A549 (cell line): ENCODE measurements at regions of chr19 and their contacts with region 1.

Region 1: DNA sequence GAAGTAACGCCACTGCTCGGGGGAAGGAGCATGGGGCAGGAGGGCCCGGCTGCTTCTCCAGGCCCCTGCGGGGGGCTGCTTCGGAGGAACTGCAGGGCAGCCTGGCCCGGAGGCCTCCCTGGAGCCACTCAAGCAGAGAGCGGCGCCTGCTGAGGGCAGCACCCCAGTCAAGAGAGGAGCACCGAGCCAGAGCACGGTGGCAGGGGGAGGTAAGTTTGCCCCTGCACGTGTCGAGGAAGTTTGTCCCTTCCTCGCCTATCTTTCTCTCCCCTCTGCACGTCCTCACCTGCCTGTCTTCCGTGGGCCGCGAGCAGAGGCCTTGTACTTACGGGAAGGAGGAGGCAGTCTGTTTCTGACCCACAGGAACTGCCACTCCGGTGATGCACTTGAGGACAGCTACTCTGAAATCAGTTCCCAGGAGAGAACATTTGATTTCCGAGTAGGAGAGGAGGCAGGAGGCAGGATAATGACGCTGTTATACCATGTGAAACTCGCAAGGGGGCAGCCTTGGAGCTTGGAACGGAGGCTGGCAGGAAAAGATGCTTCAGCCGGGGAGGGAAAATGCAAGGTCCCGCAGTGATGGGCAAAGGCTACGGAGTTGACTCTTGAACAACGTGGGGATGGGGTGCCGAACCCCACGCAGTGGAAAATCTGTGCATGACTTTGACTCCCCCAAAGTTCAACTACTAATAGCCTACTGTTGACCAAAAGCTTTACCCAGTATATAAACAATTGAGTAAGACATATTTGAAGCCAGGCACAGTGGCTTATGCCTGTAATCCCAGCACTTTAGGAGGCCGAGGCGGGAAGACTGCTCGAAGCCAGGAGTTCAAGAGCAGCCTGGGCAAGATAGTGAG is 5.0 kb downstream of the FFAR1 start:
- DNase-seq: peak; percentile 87 to 98
- ATAC-seq: peak; percentile 77 to 88
- H3K4me3 ChIP-seq: no peak overlapping the region
- H3K27ac ChIP-seq: no peak overlapping the region
- H3K4me1 ChIP-seq: no peaks in the 10 kb centered on the region
- CTCF ChIP-seq: peak; percentile 98
- EP300 ChIP-seq: no peak
- POLR2A ChIP-seq: no peak
- RAD21 ChIP-seq: peak; percentile 98 to 99

Region 2: DNA sequence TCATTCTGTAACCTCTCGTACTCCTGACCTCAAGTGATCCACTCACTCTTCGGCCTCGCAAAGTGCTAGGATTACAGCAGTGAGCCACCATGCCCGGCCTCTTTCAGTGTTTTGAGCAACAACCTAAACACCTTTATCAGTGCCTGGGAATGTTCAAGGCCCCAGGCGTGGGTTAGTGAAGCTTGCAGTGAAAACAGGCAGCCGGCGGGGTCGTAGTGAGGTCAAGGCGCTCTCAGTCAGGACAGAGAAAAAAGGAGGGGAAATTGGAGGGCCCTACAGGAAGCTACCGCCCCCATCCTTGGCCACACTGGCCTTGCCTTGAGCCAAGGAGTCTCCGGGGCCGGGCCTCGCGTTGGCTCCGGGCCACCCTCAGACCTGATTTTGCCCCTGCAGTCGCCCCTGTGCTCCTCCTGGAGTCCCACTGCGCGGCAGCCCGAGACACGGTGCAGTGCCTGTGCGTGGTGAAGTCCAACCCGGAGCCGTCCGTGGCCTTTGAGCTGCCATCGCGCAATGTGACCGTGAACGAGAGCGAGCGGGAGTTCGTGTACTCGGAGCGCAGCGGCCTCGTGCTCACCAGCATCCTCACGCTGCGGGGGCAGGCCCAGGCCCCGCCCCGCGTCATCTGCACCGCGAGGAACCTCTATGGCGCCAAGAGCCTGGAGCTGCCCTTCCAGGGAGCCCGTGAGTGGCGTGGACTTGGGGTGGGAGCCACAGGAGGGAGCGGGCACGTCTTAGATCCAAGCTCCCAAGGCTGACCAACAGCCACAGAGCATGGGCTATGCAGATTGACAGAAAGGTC is 43.0 kb before region 1 on chr19:
- CTCF ChIA-PET with region 1: interaction called, 22 read pairs
- POLR2A ChIA-PET with region 1: no interaction called
- DNase-seq: no peak
- ATAC-seq: no peak
- H3K4me3 ChIP-seq: no peak overlapping the region
- H3K27ac ChIP-seq: no peak overlapping the region
- H3K4me1 ChIP-seq: peaks cover 2% of the 10 kb centered on the region; the same call in 1 of the 3 replicates
- CTCF ChIP-seq: no peak
- EP300 ChIP-seq: no peak
- POLR2A ChIP-seq: 0 out of 2 replicates have a peak, but pooled peaks have one; percentile 5
- RAD21 ChIP-seq: no peak

Region 3: DNA sequence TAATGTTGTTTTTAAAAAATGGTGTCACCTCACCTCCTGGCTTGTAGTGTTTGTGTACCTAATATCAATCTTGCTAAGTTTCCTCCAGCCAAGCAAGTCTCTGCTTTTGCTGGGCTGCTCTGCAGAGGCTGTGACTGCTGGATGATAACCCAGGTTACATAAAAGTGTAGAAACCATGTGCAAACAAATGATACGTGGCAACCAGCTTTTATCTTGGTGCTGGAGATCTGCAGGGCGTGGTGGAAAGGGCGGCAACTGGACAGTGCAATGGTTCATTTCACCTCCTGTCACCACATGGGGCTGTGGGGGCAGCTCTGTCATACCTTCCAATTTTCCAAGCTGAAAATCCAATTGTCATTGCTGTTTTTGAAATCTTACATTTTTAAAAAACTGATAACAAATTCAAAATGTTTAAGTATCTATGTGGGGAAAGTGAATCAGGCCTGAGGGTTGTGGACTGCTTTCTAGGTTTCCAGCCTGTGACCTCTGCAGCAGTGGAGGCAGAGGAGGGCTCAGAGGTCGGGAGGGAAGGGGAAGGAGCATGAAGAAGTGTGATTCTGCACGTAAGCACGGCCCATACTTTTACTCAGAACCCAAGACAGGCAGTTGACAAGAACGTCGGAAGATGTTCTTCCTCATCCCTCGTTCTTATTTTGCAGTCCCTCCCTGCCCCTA is 27.9 kb after region 1 on chr19:
- CTCF ChIA-PET with region 1: interaction called, 29 read pairs
- POLR2A ChIA-PET with region 1: no interaction called
- DNase-seq: no peak
- ATAC-seq: no peak; a peak in 1 of 6 replicates
- H3K4me3 ChIP-seq: no peak overlapping the region
- H3K27ac ChIP-seq: no peak overlapping the region
- H3K4me1 ChIP-seq: no peaks in the 10 kb centered on the region
- CTCF ChIP-seq: no peak
- EP300 ChIP-seq: no peak
- POLR2A ChIP-seq: no peak
- RAD21 ChIP-seq: no peak

Region 4: DNA sequence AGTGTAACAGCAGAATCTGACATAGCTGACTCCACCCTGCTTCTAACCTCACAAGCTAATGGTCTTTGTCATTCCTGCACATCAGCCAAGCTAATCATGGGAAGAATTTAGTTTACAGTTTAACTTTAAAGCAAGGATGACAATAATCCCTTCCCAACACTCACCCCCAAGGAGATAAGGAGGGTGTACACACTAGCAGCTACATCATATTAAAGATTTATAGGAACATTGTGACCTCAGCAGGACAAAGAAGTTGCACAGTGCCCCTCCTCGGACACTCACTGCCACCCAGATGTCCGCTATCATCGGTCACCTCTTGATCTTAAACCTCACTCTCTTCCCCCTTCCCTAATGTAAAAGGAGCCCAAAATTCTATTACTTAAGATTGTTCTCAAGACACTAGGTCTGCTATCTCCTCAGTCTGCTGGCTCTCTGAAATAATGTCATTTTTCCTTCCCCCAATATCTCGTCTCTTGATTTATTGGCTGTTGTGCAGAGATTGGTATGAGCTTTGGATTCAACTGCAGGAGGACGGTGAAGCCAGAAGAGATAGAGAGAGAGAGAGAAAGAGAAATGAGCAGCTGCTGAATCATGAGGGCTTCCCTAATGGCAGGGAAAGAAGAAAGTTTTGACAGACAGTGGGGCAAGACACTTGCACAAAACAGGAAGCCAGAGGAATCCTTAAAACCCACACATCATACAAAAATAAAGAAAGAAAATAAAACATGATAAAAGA is 77.9 kb after region 1 on chr19:
- CTCF ChIA-PET with region 1: interaction called, 27 read pairs
- POLR2A ChIA-PET with region 1: no interaction called
- DNase-seq: no peak
- ATAC-seq: no peak
- H3K4me3 ChIP-seq: no peak overlapping the region
- H3K27ac ChIP-seq: no peak overlapping the region
- H3K4me1 ChIP-seq: no peaks in the 10 kb centered on the region
- CTCF ChIP-seq: no peak
- EP300 ChIP-seq: no peak
- POLR2A ChIP-seq: no peak
- RAD21 ChIP-seq: no peak

Region 5: DNA sequence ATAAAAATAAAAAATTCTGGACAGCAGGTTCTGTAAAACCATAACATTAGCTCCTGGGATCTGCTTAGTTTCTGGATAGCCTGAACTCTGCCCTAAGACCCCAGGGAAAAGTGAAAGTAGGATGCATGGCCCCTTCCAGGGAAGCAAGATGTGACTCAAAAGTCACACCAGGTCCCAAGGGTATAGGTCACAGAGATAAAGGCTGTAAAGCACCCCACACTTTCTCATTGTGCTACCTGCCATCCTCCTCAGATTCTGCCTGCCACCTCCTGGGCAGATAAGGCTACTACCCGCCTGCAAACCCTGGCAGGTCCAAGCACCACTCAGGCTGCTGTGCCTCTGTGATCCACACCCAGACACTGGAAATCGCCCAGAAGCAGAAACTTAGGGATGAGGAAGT is 116.0 kb after region 1 on chr19:
- CTCF ChIA-PET with region 1: interaction called, 368 read pairs
- POLR2A ChIA-PET with region 1: no interaction called
- DNase-seq: peak; percentile 72 to 82
- ATAC-seq: peak; percentile 99
- H3K4me3 ChIP-seq: no peak overlapping the region
- H3K27ac ChIP-seq: no peak overlapping the region
- H3K4me1 ChIP-seq: no peaks in the 10 kb centered on the region
- CTCF ChIP-seq: peak; percentile 74
- EP300 ChIP-seq: no peak
- POLR2A ChIP-seq: no peak
- RAD21 ChIP-seq: peak; percentile 80 to 85

Region 6: GRCh38 chr19:35501684-35502083 is 149.0 kb after region 1 on chr19:
- CTCF ChIA-PET with region 1: interaction called, 256 read pairs
- POLR2A ChIA-PET with region 1: no interaction called
- DNase-seq: no peak
- ATAC-seq: no peak
- H3K4me3 ChIP-seq: no peak overlapping the region
- H3K27ac ChIP-seq: no peak overlapping the region
- H3K4me1 ChIP-seq: no peaks in the 10 kb centered on the region
- CTCF ChIP-seq: no peak
- EP300 ChIP-seq: no peak
- POLR2A ChIP-seq: no peak
- RAD21 ChIP-seq: no peak